ENCODE measurements at regions of chr1 and their contacts with region 1.

Region 1: GRCh38 chr1:95084317-95085176 is 11.8 kb upstream of the ALG14 start:
- DNase-seq: no peak
- ATAC-seq: no peak
- H3K4me3 ChIP-seq: no peak overlapping the region
- H3K27ac ChIP-seq: peak overlapping the region in 1 of 2 donors; percentile 25
- H3K4me1 ChIP-seq: peaks cover 0 to 8% of the 10 kb centered on the region in 2 donors
- H3K27me3 ChIP-seq: no peaks in the 10 kb centered on the region

Region 2: DNA sequence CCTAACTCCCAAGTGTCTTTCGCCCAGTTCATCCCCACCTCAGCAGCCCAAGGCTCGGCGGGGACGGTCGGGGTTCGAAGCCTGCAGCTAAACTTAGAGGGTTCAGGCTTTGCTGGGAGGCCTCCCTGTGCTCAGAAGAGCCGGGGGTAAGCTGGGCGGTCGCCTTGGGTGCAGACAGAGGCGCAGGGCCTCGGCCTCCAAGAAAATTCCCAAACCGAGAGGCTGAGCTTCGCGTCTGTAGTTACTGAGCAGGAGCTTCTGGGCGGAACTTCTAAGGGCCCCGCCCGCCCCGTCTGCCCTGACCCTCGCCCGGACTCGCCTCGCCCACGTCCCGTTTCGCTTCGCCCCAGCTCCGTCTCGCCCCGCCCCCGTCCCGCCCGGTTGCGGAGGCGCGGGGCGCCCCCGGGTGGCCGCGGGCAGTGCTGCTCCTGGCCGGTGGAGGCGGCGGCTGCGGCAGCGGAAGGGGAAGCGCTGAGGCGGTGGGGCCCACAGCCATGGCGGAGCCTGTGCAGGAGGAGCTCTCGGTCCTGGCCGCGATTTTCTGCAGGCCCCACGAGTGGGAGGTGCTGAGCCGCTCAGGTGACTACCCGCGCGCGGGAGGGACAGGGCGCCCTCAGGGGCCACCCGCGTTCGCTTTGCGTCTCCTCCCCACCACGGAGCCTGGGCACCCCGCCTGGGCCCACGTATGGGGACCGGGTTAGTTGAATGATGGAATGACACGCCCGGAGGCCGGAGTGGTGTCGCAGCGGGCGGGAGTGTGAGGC is 149.4 kb after region 1 on chr1 and contains the start of gene RWDD3:
- intact Hi-C with region 1: loop called (anchors 5 to 10 kb)
- DNase-seq: peak; percentile 96 to 98
- ATAC-seq: peak; percentile 99
- H3K4me3 ChIP-seq: peak within 1 kb of the TSS; percentile 79 to 91
- H3K27ac ChIP-seq: peak within 1 kb of the TSS; percentile 50 to 85
- H3K4me1 ChIP-seq: peaks cover 3 to 4% of the 10 kb centered on the region in 2 donors
- H3K27me3 ChIP-seq: no peaks in the 10 kb centered on the region
- total RNA-seq, gene RWDD3: 16.7 to 18.3 TPM